ENCODE measurements at regions of chr16 and their contacts with region 1.

Region 1: DNA sequence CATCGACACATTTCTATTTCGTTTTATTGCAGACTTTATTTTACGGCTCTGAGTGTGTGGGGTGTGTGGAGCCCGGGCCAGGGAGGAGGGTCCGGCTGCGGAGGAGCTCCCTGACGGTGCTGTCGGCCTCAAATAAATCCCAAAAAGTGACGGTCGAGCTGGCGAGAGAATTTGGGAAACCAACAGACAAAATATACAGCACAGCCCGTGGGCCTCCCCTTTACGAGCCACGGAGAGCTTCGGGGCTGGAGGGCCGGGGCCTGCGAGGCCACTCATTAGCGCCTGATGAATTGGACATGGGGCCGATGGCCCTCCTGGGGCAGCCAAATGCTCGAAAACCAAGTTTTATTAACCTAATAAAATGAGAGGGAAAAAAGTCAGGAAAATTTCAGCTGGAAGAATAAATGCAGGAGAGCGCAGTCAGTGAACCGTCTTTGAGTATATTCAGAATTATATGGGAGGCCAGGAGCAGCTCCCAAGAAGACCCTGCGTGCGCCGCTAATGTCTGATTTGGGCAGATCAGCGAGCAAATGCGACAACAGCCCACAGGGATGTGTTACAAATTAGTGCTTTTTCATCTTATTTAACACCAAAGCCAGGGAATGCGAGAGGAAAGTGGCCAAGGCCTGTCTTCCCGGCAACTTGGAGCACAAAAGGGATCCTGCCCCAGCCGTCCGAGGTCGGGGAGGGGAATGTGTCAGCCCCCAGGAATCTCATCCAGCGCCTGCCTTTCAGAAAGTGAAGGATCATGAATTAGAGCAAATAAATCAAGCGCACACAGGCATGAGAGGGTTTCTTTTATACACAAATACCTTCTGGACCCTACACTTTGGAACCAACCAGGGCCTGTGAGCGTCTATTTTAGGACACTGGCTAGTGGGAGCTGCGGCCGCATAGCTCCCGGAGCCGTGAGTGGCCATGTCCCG is 249.1 kb downstream of the C16orf95 start:
- DNase-seq: no peak
- ATAC-seq: peak; percentile 57
- H3K4me3 ChIP-seq: no peak overlapping the region
- H3K27ac ChIP-seq: peak overlapping the region; percentile 18 to 22
- H3K4me1 ChIP-seq: no peaks in the 10 kb centered on the region
- H3K27me3 ChIP-seq: no peaks in the 10 kb centered on the region

Region 2: GRCh38 chr16:87203060-87203656 is 135.1 kb after region 1 on chr16:
- intact Hi-C with region 1: loop called (anchors 5 kb)
- DNase-seq: peak; percentile 82 to 89
- ATAC-seq: no peak
- H3K4me3 ChIP-seq: no peak overlapping the region
- H3K27ac ChIP-seq: peak overlapping the region in 1 of 2 donors; percentile 12
- H3K4me1 ChIP-seq: peaks cover 0 to 4% of the 10 kb centered on the region in 2 donors
- H3K27me3 ChIP-seq: no peaks in the 10 kb centered on the region

Measured in aorta (tissue), 5 donors.